CD4-positive, alpha-beta T cell (primary cell): ENCODE measurements at regions of chr3 and their contacts with region 1.

Region 1: DNA sequence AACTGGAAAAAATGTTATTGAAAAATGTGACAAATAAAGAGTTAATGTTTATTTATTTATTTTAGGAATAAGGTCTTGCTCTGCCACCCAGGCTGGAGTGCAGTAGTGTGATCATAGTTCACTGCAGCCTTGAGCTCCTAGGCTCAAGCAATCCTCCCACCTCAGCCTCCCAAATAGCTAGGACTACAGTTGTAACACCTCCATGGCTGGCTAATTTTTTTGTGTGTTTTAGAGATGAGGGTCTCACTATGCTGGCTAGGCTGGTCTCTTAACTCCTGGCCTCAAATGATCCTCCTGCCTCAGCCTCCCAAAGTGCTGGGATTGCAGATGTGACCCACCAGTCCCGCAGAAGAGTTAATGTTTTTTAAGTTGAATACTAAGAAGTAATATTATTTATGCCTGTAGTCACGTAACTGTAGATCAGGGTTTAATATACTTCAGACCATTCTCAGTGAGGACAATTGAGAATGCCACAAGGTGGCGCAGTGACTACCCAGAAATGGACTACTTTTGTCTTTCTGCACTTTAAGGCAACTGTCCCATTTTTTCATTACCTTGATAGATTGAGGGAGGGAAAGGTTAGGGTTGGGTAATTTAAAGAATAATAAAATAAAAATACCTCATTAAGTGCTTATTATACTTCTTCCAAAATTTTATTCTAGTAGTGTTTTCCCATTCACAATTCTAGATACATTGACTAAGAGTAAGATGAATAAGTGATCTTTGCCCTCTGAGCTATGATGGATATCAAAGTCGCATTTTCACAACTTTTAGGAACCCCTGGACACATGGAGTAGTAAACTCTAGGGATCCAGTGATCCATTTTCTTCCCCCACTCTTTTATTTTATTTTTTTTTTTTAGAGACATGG is 6.0 kb downstream of the MUC13 start:
- DNase-seq: peak; percentile 30 to 77 (median 48)
- ATAC-seq: peak; percentile 49
- H3K4me3 ChIP-seq: no peak overlapping the region
- H3K4me3 Mint-ChIP-seq: no peak overlapping the region
- H3K27ac ChIP-seq: no peak overlapping the region
- H3K27ac Mint-ChIP-seq: no peak overlapping the region
- H3K4me1 ChIP-seq: no peaks in the 10 kb centered on the region
- H3K4me1 Mint-ChIP-seq: no peaks in the 10 kb centered on the region
- H3K27me3 ChIP-seq: no peaks in the 10 kb centered on the region
- H3K27me3 Mint-ChIP-seq: peaks cover 8% of the 10 kb centered on the region
- CTCF ChIP-seq: peak; percentile 76

Region 2: DNA sequence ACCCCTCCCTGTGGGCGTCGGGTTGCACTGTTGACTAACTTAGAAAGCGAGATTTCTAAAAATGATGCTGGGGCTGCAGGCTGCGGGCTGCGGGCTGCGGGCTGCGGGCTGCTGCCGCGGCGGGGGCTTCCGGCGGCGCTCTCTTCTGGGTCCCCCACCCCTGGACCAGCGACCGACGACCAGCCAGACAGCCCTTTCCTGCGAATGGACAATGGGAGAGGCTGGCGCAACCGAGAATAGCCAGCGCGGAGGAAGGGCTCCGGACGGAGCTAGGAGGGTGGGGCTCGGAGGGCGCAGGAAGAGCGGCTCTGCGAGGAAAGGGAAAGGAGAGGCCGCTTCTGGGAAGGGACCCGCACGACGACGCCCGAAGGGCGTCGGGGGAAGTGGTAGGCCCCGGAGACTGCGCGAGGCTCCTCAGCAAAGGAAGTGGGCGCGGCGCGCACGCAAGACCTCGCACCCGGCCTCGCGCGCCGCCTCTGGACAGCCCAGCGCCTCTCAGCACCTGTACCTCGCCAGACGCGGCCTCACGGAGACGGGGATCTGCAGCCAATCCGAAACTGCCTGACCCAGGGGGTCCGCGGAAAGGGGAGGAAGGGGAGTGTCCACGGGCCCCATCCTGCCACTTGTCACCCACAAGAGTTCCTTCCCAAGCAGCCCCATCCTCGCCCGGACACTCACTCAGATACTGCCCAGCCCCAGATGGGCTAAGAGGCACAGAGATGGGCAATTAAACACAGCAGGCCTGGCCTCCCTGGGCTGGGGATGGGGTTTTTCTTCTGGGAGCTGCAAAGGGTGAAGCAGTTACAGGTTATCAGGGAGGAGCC is 213.2 kb after region 1 on chr3:
- CTCF ChIA-PET with region 1: no interaction called
- POLR2A ChIA-PET with region 1: no interaction called
- intact Hi-C with region 1: loop called in 1 of 2 experiments (anchors 2 kb)
- DNase-seq: peak; percentile 27 to 85 (median 67)
- ATAC-seq: peak; percentile 89
- H3K4me3 ChIP-seq: peak overlapping the region; percentile 53
- H3K4me3 Mint-ChIP-seq: peak overlapping the region; percentile 80
- H3K27ac ChIP-seq: no peak overlapping the region
- H3K27ac Mint-ChIP-seq: peak overlapping the region; percentile 16
- H3K4me1 ChIP-seq: peaks cover 40% of the 10 kb centered on the region
- H3K4me1 Mint-ChIP-seq: peaks cover 37% of the 10 kb centered on the region
- H3K27me3 ChIP-seq: no peaks in the 10 kb centered on the region
- H3K27me3 Mint-ChIP-seq: no peaks in the 10 kb centered on the region
- CTCF ChIP-seq: peak; percentile 40

Region 3: GRCh38 chr3:125202197-125202596 is 273.6 kb after region 1 on chr3:
- CTCF ChIA-PET with region 1: no interaction called
- POLR2A ChIA-PET with region 1: no interaction called
- intact Hi-C with region 1: loop called in 1 of 2 experiments (anchors 5 kb)
- DNase-seq: peak in 4 of 14 experiments; percentile 15 to 35 (median 25)
- ATAC-seq: no peak
- H3K4me3 ChIP-seq: no peak overlapping the region
- H3K4me3 Mint-ChIP-seq: no peak overlapping the region
- H3K27ac ChIP-seq: no peak overlapping the region
- H3K27ac Mint-ChIP-seq: no peak overlapping the region
- H3K4me1 ChIP-seq: no peaks in the 10 kb centered on the region
- H3K4me1 Mint-ChIP-seq: no peaks in the 10 kb centered on the region
- H3K27me3 ChIP-seq: no peaks in the 10 kb centered on the region
- H3K27me3 Mint-ChIP-seq: peaks cover 6% of the 10 kb centered on the region
- CTCF ChIP-seq: no peak

Region 4: DNA sequence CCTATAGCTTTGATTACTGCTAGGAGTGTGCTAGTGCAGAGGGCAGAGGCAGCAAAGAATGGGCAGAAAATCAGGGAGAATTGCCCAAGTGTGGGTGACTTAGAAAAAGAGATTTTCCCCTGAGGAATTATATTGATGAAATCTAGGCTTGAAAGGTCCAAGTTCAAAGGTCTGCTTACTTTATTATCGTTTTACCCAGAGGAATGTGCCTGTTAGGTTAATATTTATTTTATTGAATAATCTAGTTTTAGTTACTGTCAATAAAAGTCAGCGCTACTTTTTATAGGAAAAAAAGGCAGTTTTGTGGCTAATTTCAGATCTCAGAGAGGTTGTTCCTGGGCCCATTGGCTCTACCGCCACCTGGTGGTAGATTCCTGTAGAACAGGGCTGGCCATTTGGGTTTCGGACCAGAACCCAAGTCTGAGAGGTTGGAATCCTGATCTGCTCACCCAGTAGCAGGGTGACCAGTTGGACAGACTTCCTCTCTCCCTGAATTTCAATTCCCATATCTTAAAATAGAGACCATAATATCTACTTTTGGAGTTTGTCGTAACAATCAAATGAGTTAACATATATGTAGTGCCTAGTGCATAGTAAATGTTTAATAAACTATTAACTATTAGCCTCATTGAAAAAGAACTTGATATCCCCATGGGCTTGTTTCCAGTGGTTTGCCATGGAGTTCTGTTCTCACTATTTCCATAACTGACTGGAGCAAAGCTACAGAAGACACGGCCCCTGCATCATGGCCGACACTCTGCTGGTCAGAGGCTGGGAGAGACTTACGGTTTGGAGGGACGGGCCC is 509.3 kb after region 1 on chr3:
- CTCF ChIA-PET with region 1: interaction called, 4 read pairs
- POLR2A ChIA-PET with region 1: no interaction called
- intact Hi-C with region 1: loop called (anchors 1 kb)
- DNase-seq: peak; percentile 45 to 78 (median 58)
- ATAC-seq: peak; percentile 59
- H3K4me3 ChIP-seq: no peak overlapping the region
- H3K4me3 Mint-ChIP-seq: no peak overlapping the region
- H3K27ac ChIP-seq: no peak overlapping the region
- H3K27ac Mint-ChIP-seq: no peak overlapping the region
- H3K4me1 ChIP-seq: peaks cover 2% of the 10 kb centered on the region
- H3K4me1 Mint-ChIP-seq: no peaks in the 10 kb centered on the region
- H3K27me3 ChIP-seq: no peaks in the 10 kb centered on the region
- H3K27me3 Mint-ChIP-seq: no peaks in the 10 kb centered on the region
- CTCF ChIP-seq: peak; percentile 95

Region 5: GRCh38 chr3:125585595-125586223 is 657.1 kb after region 1 on chr3:
- CTCF ChIA-PET with region 1: no interaction called
- POLR2A ChIA-PET with region 1: no interaction called
- intact Hi-C with region 1: loop called (anchors 1 kb)
- DNase-seq: peak in 12 of 14 experiments; percentile 5 to 70 (median 28)
- ATAC-seq: peak; percentile 46
- H3K4me3 ChIP-seq: no peak overlapping the region
- H3K4me3 Mint-ChIP-seq: no peak overlapping the region
- H3K27ac ChIP-seq: no peak overlapping the region
- H3K27ac Mint-ChIP-seq: no peak overlapping the region
- H3K4me1 ChIP-seq: peaks cover 4% of the 10 kb centered on the region
- H3K4me1 Mint-ChIP-seq: peaks cover 28% of the 10 kb centered on the region
- H3K27me3 ChIP-seq: no peaks in the 10 kb centered on the region
- H3K27me3 Mint-ChIP-seq: no peaks in the 10 kb centered on the region
- CTCF ChIP-seq: peak; percentile 91